ENCODE measurements at regions of chr17 and their contacts with region 1.

Region 1: DNA sequence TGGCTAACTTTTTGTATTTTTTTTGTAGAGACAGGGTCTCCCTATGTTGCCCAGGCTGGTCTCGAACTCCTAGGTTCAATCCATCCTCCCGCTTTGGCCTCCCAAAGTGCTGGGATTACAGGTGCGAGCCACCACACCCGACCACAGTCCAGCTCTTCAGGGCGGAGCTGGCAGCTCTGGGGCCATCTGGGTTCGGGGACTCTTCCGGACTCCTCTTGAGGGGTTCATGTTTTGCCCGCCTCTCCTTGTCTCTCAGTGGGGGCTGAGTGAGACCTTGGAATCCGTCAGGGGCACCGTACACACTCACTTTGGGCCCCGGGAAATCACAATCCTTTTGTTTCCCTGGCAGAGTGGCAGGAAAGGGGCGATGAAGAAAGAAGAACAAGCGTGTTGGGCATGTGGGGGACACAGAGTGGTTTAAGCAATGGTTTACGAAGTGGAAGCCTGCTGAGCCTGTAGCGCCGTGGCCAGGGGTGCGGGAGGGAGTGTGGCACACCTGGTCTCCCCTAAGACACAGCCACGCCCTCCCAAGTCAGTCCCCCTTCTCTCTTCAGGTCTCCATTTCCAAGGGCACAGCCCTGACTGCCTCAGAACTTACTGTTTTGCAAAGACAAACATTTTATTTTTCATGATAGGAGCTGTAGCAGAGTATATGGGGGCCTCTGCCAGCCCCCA is 26.1 kb downstream of the TNS4 start:
- DNase-seq: no peak
- CTCF ChIP-seq: no peak

Region 2: GRCh38 chr17:40456396-40456951 is 18.9 kb before region 1 on chr17:
- CTCF ChIA-PET with region 1: interaction called, 13 read pairs
- POLR2A ChIA-PET with region 1: no interaction called
- DNase-seq: no peak
- CTCF ChIP-seq: no peak

Region 3: GRCh38 chr17:40497690-40498089 is 22.3 kb after region 1 on chr17:
- CTCF ChIA-PET with region 1: interaction called, 29 read pairs
- POLR2A ChIA-PET with region 1: no interaction called
- DNase-seq: no peak
- CTCF ChIP-seq: no peak